Endothelial cell of umbilical vein (primary cell): ENCODE measurements at regions of chr6 and their contacts with region 1.

Region 1: GRCh38 chr6:89432875-89433251 is at the start of gene ANKRD6:
- DNase-seq: peak; percentile 37
- H3K4me3 ChIP-seq: peak within 1 kb of the TSS; percentile 26 to 64 (median 52)
- H3K27ac ChIP-seq: no peak within 1 kb of the TSS
- H3K4me1 ChIP-seq: peaks cover 18% of the 10 kb centered on the region
- H3K27me3 ChIP-seq: peaks cover 2 to 7% of the 10 kb centered on the region in 2 experiments
- CTCF ChIP-seq: peak; percentile 80 to 82
- POLR2A ChIP-seq: no peak
- total RNA-seq, gene ANKRD6: 7.7 and 9.6 TPM in 2 replicates

Region 2: GRCh38 chr6:88763160-88763559 is 669.7 kb before region 1 on chr6:
- CTCF ChIA-PET with region 1: no interaction called
- POLR2A ChIA-PET with region 1: no interaction called
- dilution Hi-C with region 1: no loop called
- intact Hi-C with region 1: no loop called
- DNase-seq: no peak
- H3K4me3 ChIP-seq: no peak overlapping the region
- H3K27ac ChIP-seq: no peak overlapping the region
- H3K4me1 ChIP-seq: no peaks in the 10 kb centered on the region
- H3K27me3 ChIP-seq: no peaks in the 10 kb centered on the region
- CTCF ChIP-seq: no peak
- POLR2A ChIP-seq: no peak

Region 3: GRCh38 chr6:89610149-89610642 is 177.3 kb after region 1 on chr6:
- CTCF ChIA-PET with region 1: interaction called, 40 read pairs
- POLR2A ChIA-PET with region 1: no interaction called
- dilution Hi-C with region 1: no loop called
- intact Hi-C with region 1: loop called (anchors 1 kb)
- DNase-seq: peak; percentile 54
- H3K4me3 ChIP-seq: no peak overlapping the region
- H3K27ac ChIP-seq: no peak overlapping the region
- H3K4me1 ChIP-seq: peaks cover 6% of the 10 kb centered on the region
- H3K27me3 ChIP-seq: no peaks in the 10 kb centered on the region
- CTCF ChIP-seq: peak; percentile 77 to 82
- POLR2A ChIP-seq: no peak